ENCODE measurements at regions of chr4 and their contacts with region 1.

Region 1: GRCh38 chr4:114582621-114583020 is 16.0 kb upstream of the UGT8 start:
- DNase-seq: no peak
- H3K4me3 ChIP-seq: no peak overlapping the region
- H3K27ac ChIP-seq: no peak overlapping the region
- H3K4me1 ChIP-seq: no peaks in the 10 kb centered on the region
- CTCF ChIP-seq: 0 out of 2 replicates have a peak, but pooled peaks have one; percentile 21

Region 2: GRCh38 chr4:114077610-114078009 is 505.0 kb before region 1 on chr4:
- CTCF ChIA-PET with region 1: no interaction called
- POLR2A ChIA-PET with region 1: no interaction called
- intact Hi-C with region 1: no loop called
- DNase-seq: no peak
- H3K4me3 ChIP-seq: no peak overlapping the region
- H3K27ac ChIP-seq: no peak overlapping the region
- H3K4me1 ChIP-seq: no peaks in the 10 kb centered on the region
- CTCF ChIP-seq: no peak

Region 3: DNA sequence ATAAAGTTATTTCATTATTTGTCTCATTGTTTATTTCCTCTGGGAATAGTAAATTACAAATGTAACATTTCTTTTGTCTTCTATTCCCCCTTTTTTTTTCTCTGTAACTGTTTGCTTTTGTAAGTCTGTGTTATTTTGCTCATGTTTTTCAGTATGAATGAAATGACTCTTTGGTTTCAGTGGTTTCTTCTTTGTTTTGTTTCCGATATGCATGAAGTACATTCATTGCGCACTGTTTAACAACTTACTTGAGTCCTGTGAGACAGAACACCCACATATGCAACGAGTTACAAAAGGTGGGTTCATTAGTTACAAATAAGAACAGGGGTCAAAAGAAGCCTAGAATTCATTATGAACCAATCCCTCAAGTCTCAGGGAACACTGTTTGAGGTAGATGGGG is 159.0 kb before region 1 on chr4:
- CTCF ChIA-PET with region 1: no interaction called
- POLR2A ChIA-PET with region 1: no interaction called
- intact Hi-C with region 1: no loop called
- DNase-seq: no peak
- H3K4me3 ChIP-seq: no peak overlapping the region
- H3K27ac ChIP-seq: no peak overlapping the region
- H3K4me1 ChIP-seq: no peaks in the 10 kb centered on the region
- CTCF ChIP-seq: no peak

Region 4: GRCh38 chr4:114435116-114435515 is 147.5 kb before region 1 on chr4:
- CTCF ChIA-PET with region 1: no interaction called
- POLR2A ChIA-PET with region 1: no interaction called
- intact Hi-C with region 1: no loop called
- DNase-seq: no peak
- H3K4me3 ChIP-seq: no peak overlapping the region
- H3K27ac ChIP-seq: no peak overlapping the region
- H3K4me1 ChIP-seq: no peaks in the 10 kb centered on the region
- CTCF ChIP-seq: no peak

Region 5: DNA sequence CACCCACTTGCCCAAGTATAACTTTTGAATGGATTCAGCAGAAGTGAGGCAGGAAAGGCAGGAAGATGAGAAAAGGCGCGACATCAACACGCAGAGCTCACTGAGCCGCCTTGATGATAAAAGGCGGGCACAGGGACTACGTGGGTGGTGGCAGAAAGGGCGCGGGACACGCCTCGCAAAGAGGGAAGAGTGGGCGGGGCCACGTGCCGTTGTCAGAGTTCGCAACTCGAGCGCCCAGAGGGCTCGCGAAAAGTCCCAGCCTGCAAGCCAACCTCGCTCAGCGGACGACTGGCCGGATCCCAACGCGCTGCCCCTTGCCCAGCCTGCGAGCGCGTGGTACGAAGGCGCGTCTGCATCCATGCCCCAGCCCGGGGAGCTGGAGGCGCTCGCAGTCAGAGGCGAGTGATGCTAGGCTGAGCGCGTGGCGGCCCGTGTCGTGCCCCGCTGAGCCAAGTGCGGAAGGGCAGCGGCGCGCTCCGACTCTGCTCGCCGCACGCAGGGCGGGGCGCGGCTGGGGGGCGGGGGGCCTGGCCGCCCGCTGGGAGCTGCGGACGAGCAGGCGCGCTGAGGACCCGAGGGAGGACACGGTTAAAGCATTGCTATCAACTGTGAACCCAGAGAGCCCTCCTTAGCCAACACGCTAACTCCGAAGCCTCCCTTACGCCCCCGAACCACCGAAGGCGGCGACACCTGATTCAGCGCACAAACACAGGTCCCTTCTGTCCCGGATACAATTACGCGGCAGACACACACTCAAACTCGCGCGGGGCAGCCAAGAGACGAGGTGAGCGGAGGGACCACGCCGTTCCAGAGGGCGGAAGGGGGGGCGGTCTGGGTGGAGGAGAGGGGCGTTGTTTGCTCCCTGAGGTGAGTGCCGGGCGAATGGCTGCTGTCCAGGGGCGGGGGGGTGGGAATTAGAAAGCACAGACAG is 15.8 kb after region 1 on chr4 and contains the start of gene UGT8:
- CTCF ChIA-PET with region 1: no interaction called
- POLR2A ChIA-PET with region 1: interaction called, 5 read pairs
- intact Hi-C with region 1: loop called (anchors 1 kb)
- DNase-seq: peak; percentile 82
- H3K4me3 ChIP-seq: peak within 1 kb of the TSS; percentile 93
- H3K27ac ChIP-seq: peak within 1 kb of the TSS; percentile 36
- H3K4me1 ChIP-seq: peaks cover 33% of the 10 kb centered on the region
- CTCF ChIP-seq: no peak
- total RNA-seq, gene UGT8: 17.5 and 19.0 TPM in 2 replicates

Region 6: GRCh38 chr4:114827651-114828050 is 245.0 kb after region 1 on chr4:
- CTCF ChIA-PET with region 1: no interaction called
- POLR2A ChIA-PET with region 1: no interaction called
- intact Hi-C with region 1: no loop called
- DNase-seq: no peak
- H3K4me3 ChIP-seq: no peak overlapping the region
- H3K27ac ChIP-seq: no peak overlapping the region
- H3K4me1 ChIP-seq: no peaks in the 10 kb centered on the region
- CTCF ChIP-seq: no peak